IMR-90 (cell line): ENCODE measurements at regions of chr1 and their contacts with region 1.

Region 1: GRCh38 chr1:54406339-54407153 is at the start of gene SSBP3:
- DNase-seq: peak; percentile 88
- ATAC-seq: peak; percentile 92
- H3K4me3 ChIP-seq: peak within 1 kb of the TSS; percentile 92
- H3K27ac ChIP-seq: peak within 1 kb of the TSS; percentile 94
- H3K4me1 ChIP-seq: peaks cover 22% of the 10 kb centered on the region
- H3K27me3 ChIP-seq: no peaks in the 10 kb centered on the region
- CTCF ChIP-seq: no peak
- POLR2A ChIP-seq: peak; percentile 44; the same call in 1 of the 2 replicates
- RAD21 ChIP-seq: peak; percentile 3; the same call in 1 of the 2 replicates
- total RNA-seq, gene SSBP3: 9.7 and 10.9 TPM in 2 replicates

Region 2: GRCh38 chr1:53860967-53861411 is 545.6 kb before region 1 on chr1:
- CTCF ChIA-PET with region 1: no interaction called
- POLR2A ChIA-PET with region 1: no interaction called
- dilution Hi-C with region 1: no loop called
- in situ Hi-C with region 1: no loop called
- intact Hi-C with region 1: loop called (anchors 10 kb)
- DNase-seq: peak; percentile 61
- ATAC-seq: peak; percentile 87
- H3K4me3 ChIP-seq: no peak overlapping the region
- H3K27ac ChIP-seq: no peak overlapping the region
- H3K4me1 ChIP-seq: no peaks in the 10 kb centered on the region
- H3K27me3 ChIP-seq: no peaks in the 10 kb centered on the region
- CTCF ChIP-seq: peak; percentile 81
- POLR2A ChIP-seq: no peak
- RAD21 ChIP-seq: peak; percentile 80

Region 3: DNA sequence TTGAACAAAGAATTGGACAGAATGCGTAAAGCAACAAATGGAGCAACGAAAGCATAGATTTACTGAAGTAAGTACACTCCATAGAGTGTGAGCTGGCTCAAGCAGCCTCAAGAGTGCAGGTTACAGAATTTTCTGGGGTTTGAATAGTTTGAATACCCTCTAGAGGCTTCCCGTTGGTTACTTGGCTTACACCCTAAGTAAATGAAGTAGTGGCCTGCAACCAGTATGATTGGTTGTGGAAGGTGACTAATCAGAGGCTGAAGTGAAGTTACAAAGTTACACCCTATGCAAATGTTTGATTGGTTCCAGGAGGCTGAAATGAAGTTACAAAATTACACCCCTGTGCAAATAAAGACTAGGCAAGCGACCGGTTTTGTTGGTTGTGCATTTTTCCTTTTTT is 342.2 kb before region 1 on chr1:
- CTCF ChIA-PET with region 1: no interaction called
- POLR2A ChIA-PET with region 1: no interaction called
- dilution Hi-C with region 1: no loop called
- in situ Hi-C with region 1: no loop called
- intact Hi-C with region 1: no loop called
- DNase-seq: no peak
- ATAC-seq: no peak
- H3K4me3 ChIP-seq: no peak overlapping the region
- H3K27ac ChIP-seq: no peak overlapping the region
- H3K4me1 ChIP-seq: no peaks in the 10 kb centered on the region
- H3K27me3 ChIP-seq: no peaks in the 10 kb centered on the region
- CTCF ChIP-seq: no peak
- POLR2A ChIP-seq: no peak
- RAD21 ChIP-seq: no peak

Region 4: GRCh38 chr1:54121482-54122134 is 284.9 kb before region 1 on chr1:
- CTCF ChIA-PET with region 1: no interaction called
- POLR2A ChIA-PET with region 1: interaction called, 3 read pairs
- dilution Hi-C with region 1: no loop called
- in situ Hi-C with region 1: no loop called
- intact Hi-C with region 1: loop called (anchors 1 kb)
- DNase-seq: peak; percentile 82
- ATAC-seq: peak; percentile 90
- H3K4me3 ChIP-seq: peak overlapping the region; percentile 13; the same call in 1 of the 2 replicates
- H3K27ac ChIP-seq: no peak overlapping the region; the same call in 1 of the 2 replicates
- H3K4me1 ChIP-seq: peaks cover 9% of the 10 kb centered on the region
- H3K27me3 ChIP-seq: no peaks in the 10 kb centered on the region; the same call in 1 of the 2 replicates
- CTCF ChIP-seq: peak; percentile 90
- POLR2A ChIP-seq: peak; percentile 44; the same call in 1 of the 2 replicates
- RAD21 ChIP-seq: peak; percentile 89

Region 5: DNA sequence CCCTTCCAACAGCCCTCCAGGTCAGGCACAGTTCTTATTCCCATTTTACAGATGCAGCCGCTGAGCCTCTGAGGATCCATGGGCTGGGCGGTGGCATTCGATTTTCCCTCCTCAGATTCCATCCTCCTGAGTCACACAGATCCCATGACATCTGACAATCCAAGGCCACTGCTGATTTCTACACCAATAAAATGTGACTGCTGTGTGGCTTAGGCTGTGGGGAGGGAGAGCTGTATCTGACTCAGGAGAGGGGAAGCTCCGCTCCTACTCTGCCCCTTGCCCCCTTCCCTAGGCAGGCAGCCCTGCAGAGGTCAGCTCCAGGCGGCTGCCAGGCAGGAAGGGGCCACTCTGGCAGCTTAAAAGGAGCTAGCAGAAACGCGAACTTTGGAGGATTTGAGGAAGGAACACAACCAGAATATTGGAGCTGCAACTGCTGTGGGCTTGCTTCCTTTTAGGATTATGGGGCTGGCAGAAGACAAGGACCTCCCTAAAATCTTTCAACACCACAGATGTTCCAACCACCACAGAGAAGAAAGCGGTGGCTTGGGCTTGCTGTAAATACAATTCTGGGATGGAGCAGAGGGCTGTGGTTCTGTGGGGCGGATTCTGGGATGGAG is 156.6 kb before region 1 on chr1:
- CTCF ChIA-PET with region 1: no interaction called
- POLR2A ChIA-PET with region 1: interaction called, 25 read pairs
- dilution Hi-C with region 1: no loop called
- in situ Hi-C with region 1: no loop called
- intact Hi-C with region 1: no loop called
- DNase-seq: peak; percentile 54
- ATAC-seq: no peak
- H3K4me3 ChIP-seq: no peak overlapping the region
- H3K27ac ChIP-seq: no peak overlapping the region
- H3K4me1 ChIP-seq: peaks cover 19% of the 10 kb centered on the region
- H3K27me3 ChIP-seq: no peaks in the 10 kb centered on the region
- CTCF ChIP-seq: no peak
- POLR2A ChIP-seq: no peak
- RAD21 ChIP-seq: no peak

Region 6: DNA sequence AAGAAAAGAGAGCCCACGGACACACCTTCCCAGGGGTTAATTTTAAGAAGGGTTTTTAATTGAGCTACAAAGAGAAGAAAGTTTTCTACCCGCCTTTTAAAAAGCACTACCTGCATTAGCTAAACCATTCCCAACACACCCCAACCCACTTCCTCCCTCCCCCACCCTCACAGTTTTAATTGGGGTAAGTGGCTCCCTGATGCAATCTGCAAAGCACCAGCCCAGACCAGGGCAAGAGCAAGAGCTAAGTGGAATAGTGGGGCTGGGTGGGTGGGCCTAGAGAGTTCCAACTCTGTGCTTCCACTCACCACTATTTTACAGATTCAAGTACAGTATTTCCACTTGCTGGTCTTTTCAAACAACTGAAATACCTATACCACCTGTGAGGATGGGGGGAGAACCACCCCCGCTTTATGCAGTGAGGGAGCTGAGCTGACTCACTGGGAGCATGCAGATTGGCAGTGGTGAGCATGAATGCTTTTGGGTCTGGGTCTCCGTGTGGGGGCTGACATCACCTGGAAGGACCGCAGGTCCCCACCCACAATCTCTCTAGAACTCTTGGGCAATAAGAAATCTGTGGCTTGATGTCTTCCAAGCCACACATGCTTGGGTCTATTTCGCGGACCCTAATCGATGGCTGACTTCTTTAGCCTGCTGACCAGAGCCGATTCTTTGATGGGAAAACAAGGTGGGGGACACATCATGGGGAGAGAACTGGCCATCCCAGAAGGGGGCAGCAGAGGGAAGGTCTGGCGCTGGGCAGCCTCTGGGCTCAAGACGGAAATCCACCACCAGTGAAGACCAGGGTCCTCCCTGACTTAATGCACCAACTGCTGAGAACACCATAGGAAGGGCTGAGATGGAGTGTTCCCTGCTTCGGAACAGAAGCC is 95.9 kb before region 1 on chr1:
- CTCF ChIA-PET with region 1: no interaction called
- POLR2A ChIA-PET with region 1: interaction called, 25 read pairs
- dilution Hi-C with region 1: no loop called
- in situ Hi-C with region 1: no loop called
- intact Hi-C with region 1: loop called (anchors 5 kb)
- DNase-seq: peak; percentile 39
- ATAC-seq: peak; percentile 50
- H3K4me3 ChIP-seq: no peak overlapping the region
- H3K27ac ChIP-seq: no peak overlapping the region
- H3K4me1 ChIP-seq: peaks cover 20% of the 10 kb centered on the region
- H3K27me3 ChIP-seq: no peaks in the 10 kb centered on the region
- CTCF ChIP-seq: peak; percentile 58
- POLR2A ChIP-seq: no peak
- RAD21 ChIP-seq: peak; percentile 79